PC-3 (cell line): ENCODE measurements at regions of chr9 and their contacts with region 1.

Region 1: GRCh38 chr9:35756275-35757225 is 2.5 kb upstream of the MSMP start:
- DNase-seq: peak; percentile 61
- ATAC-seq: peak; percentile 49
- H3K4me3 ChIP-seq: peak overlapping the region; percentile 71
- H3K27ac ChIP-seq: peak overlapping the region; percentile 79
- H3K4me1 ChIP-seq: peaks cover 30% of the 10 kb centered on the region
- H3K27me3 ChIP-seq: no peaks in the 10 kb centered on the region
- CTCF ChIP-seq: peak; percentile 68

Region 2: GRCh38 chr9:35664531-35665470 is 91.7 kb before region 1 on chr9 and contains the start of gene ARHGEF39:
- CTCF ChIA-PET with region 1: no interaction called
- POLR2A ChIA-PET with region 1: interaction called, 14 read pairs
- intact Hi-C with region 1: no loop called
- DNase-seq: peak; percentile 81
- ATAC-seq: peak; percentile 78
- H3K4me3 ChIP-seq: peak within 1 kb of the TSS; percentile 67
- H3K27ac ChIP-seq: peak within 1 kb of the TSS; percentile 57
- H3K4me1 ChIP-seq: peaks cover 44% of the 10 kb centered on the region
- H3K27me3 ChIP-seq: no peaks in the 10 kb centered on the region
- CTCF ChIP-seq: peak; percentile 51; the same call in 1 of the 2 replicates
- total RNA-seq, gene ARHGEF39: 2.6 and 4.1 TPM in 2 replicates

Region 3: GRCh38 chr9:35732122-35732799 is 24.3 kb before region 1 on chr9 and contains the starts of genes CREB3 and TLN1:
- CTCF ChIA-PET with region 1: no interaction called
- POLR2A ChIA-PET with region 1: interaction called, 26 read pairs
- intact Hi-C with region 1: no loop called
- DNase-seq: peak; percentile 96
- ATAC-seq: peak; percentile 74
- H3K4me3 ChIP-seq: peak within 1 kb of the TSS; percentile 90
- H3K27ac ChIP-seq: peak within 1 kb of the TSS; percentile 84
- H3K4me1 ChIP-seq: peaks cover 53% of the 10 kb centered on the region
- H3K27me3 ChIP-seq: no peaks in the 10 kb centered on the region
- CTCF ChIP-seq: peak; percentile 21; the same call in 1 of the 2 replicates
- total RNA-seq, gene CREB3: 34.8 and 47.1 TPM in 2 replicates
- total RNA-seq, gene TLN1: 118 and 153 TPM in 2 replicates

Region 4: DNA sequence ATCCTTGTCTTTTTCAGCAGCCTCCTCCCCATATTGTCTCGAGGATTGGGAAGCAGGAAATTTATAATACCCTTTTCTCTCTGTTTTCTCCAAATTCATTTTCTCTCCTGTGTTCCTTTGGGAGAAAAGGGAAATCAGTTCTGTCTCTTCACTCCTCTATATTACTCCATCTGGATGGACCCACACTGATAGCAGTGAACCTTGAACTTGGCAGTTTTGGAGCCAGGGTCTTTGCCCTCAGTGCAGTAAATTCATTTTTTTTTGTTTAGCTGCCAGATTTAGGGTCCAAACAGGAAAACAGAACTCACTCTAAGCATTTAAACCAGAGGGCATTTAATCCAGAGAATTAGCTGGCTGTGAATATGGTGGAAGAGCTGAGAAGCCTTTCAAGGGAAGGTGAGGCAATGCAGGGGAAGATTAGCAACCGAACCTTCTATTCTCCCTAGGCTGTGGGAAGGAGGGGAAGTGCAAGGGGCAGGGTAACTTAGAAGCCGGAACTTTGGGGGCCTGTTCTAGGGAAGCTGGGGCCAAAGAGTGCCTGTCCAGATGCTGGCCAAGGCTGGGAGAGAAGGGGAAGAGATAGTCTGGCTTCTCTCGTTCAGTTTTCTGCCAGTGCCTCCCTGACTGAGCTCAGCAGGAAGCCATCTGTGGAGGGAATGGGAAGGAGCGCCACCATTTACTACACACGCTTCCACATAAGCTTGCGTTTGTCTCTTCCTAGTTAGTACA is 18.5 kb after region 1 on chr9:
- CTCF ChIA-PET with region 1: interaction called, 7 read pairs
- POLR2A ChIA-PET with region 1: no interaction called
- intact Hi-C with region 1: loop called (anchors 1 kb)
- DNase-seq: no peak
- ATAC-seq: no peak
- H3K4me3 ChIP-seq: no peak overlapping the region
- H3K27ac ChIP-seq: no peak overlapping the region
- H3K4me1 ChIP-seq: peaks cover 34% of the 10 kb centered on the region
- H3K27me3 ChIP-seq: no peaks in the 10 kb centered on the region
- CTCF ChIP-seq: no peak